ENCODE measurements at regions of chr10 and their contacts with region 1.

Region 1: DNA sequence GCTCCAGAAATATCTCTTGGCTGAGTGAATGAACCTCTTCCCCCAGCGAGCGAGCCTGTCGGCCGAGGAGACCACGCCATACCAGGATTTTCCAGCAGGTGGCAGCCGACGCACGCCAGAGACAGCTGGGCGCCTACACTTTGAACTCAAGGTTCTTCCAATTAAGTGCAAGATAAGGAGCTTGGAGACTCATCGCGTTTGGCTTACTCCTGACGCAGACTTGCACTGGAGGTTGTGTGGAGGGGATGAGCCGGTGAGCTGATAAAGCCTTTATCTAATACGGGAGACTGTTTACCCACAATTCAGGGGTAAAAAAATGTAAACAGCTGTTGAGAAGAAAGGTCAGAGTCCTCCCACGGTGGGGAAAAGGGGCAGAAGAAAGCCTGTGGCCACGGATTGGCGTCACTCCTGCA is 45.9 kb upstream of the EMX2 start:
- DNase-seq: peak; percentile 51
- H3K4me3 Mint-ChIP-seq: no peak overlapping the region
- H3K27ac Mint-ChIP-seq: no peak overlapping the region
- H3K4me1 Mint-ChIP-seq: peaks cover 2% of the 10 kb centered on the region
- H3K27me3 Mint-ChIP-seq: peaks cover 20% of the 10 kb centered on the region

Region 2: DNA sequence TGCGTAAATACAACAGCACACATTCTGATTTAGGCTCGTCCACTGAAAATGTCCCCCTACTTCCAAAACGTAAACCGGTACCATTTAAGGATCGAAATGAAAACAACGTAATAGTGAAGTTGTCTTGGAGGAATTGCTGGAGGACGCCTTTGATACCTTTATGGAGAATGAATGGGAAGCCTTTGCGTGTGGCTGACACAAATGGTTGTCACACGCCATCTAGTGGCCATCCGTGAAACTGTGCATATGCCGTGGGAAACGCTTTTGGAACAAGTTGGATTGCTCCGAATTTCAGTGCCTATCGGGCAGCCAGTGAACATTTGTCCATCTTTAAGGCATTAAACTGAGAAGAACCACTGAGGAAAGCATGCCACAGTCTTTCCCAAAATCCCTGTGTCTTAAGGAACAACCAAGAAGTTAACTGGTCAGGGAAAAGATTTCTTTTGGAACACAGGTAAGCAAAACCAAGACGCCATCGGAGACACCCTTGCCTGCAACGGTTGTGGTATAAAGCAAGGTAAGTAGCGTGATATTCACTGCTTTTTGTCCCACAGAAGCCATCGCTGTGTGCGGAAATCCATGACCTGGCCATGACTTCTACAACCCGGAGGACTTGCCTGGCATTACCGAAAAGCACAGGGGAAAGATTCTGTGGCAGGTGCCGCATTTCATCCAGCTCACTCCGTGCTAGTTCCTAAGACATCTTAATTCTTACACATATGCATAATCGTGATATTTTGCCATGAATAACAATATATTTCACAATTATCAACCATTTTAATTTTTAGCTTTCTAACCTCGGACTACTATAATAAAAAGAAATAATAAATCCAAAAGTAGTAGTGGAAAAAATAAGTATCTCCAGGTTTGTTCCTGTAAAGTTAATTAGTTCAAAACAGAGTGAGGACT is 744.9 kb after region 1 on chr10:
- intact Hi-C with region 1: loop called (anchors 1 kb)
- DNase-seq: peak; percentile 43
- H3K4me3 Mint-ChIP-seq: no peak overlapping the region
- H3K27ac Mint-ChIP-seq: no peak overlapping the region
- H3K4me1 Mint-ChIP-seq: no peaks in the 10 kb centered on the region
- H3K27me3 Mint-ChIP-seq: peaks cover 26% of the 10 kb centered on the region

Region 3: DNA sequence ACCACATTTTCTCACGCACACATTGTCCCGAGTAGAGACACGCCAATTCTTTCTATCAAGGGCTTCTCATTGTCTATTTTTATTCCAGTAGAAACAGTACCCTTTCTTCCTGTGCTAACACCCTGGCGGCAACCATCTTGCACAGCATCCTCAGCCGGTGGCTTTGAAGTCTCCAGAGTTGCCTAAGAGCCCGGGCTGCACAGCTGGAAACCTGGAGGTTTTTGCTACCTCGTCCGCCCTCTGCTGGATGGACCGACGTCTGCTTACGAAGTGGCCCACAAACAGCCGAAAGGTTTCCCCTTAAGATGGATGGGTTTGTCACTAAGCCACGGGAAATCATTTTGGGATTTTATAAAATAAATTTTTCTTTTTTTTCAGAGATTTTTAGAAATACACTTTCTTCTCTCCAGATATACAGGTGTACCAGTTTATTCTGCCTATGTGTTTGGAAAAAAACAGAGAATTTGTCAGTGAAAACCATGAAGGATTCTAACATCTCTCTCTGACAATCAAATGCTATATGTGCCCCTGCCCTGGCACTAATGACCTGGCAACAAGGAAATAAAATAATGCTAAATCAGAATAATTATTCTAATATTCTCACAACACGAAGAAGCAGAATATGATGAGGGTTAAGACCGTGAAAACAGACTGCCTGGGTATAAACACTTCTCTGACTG is 927.3 kb after region 1 on chr10:
- intact Hi-C with region 1: loop called (anchors 2 kb)
- DNase-seq: peak; percentile 48
- H3K4me3 Mint-ChIP-seq: no peak overlapping the region
- H3K27ac Mint-ChIP-seq: no peak overlapping the region
- H3K4me1 Mint-ChIP-seq: no peaks in the 10 kb centered on the region
- H3K27me3 Mint-ChIP-seq: peaks cover 5% of the 10 kb centered on the region

Measured in activated T-helper 2 cell treated with anti-CD3 and anti-CD28 coated beads, Interferon-gamma antibody, Interleukin-2, Interleukin-4, amounts not matched to agents 10 μg/mL and 5 μg/mL and 100 μg/mL, durations not matched to agents 14 hours and 24 hours and 36 hours (primary cell).